ENCODE measurements at regions of chr11 and their contacts with region 1.

Region 1: DNA sequence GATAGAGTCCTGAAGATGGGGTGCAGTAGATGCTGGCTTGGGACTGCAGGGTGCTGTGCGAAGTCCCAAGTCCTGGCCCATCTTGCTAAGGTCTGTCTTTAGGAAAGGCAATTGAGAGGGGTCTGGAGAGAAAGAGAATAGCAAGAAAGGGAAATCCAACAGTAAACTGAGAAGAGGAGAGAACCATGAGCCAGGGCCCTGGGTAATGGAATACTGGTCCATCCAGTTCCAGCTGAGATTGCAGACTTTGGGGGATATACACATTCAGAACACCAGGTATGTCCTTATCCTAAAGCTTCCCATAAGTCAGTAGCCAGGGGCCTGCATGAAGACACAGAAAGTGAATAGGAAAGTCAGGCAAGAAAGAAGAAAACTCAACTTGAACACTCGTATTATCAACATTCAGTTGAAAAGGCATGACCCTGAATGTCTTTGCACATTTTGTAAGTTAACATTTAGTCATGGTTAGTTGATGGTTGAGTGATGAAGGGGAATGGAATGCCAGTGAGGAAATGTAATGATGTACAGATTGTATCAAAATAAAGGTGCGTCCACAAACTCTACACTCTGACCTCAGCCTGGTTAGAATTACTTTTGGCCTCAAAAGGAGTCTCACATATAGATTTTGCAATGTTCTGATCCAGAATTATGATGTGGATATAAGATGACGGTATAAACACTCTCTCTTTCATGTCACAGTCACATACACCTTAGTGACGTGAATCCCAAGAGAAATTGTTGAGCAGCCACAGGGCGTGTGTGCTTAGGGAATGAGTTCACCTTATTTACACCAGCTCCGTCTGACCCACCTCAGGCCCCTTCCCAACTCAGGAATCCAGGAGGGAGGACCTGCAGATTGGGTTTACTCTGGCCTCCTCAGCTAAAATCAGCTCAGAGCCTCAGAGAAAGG is 100.3 kb downstream of the RDX start:
- DNase-seq: no peak
- H3K4me3 ChIP-seq: no peak overlapping the region
- CTCF ChIP-seq: no peak

Region 2: DNA sequence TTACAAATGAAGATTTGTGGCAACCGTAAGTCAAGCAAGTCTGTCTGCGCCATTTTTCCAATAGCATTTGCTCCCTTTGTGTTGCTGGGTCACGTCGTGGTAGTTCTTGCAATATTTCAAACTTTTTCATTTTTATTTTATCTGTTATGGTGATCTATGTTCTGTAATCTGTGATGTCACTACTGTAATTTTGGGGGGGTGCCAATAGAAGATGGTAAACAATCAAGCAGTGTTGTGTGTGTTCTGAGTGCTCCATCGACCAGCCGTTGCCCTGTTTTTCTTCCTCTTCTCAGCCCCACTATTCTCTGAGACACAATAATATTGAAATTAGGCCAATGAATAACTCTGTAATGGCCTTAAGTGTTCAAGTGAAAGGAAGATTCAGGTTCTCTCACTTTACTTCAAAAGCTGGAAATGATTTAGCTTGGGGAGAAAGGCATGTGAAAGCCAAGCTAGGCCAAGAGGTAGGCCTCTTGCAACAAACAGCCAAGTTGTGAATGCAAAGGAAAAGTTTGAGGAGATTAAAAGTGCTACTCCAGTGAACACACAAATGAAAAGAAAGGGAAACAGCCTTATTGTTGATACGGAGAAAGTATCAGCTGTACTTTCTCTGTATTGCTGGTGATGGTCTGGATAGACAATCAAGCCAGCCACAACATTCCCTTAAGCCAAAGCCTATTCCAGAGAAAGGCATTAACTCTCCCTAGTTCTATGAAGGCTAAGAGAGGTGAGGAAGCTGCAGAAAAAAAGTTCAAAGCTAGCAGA is 95.4 kb before region 1 on chr11:
- CTCF ChIA-PET with region 1: no interaction called
- POLR2A ChIA-PET with region 1: no interaction called
- DNase-seq: no peak
- H3K4me3 ChIP-seq: no peak overlapping the region
- CTCF ChIP-seq: no peak

Region 3: DNA sequence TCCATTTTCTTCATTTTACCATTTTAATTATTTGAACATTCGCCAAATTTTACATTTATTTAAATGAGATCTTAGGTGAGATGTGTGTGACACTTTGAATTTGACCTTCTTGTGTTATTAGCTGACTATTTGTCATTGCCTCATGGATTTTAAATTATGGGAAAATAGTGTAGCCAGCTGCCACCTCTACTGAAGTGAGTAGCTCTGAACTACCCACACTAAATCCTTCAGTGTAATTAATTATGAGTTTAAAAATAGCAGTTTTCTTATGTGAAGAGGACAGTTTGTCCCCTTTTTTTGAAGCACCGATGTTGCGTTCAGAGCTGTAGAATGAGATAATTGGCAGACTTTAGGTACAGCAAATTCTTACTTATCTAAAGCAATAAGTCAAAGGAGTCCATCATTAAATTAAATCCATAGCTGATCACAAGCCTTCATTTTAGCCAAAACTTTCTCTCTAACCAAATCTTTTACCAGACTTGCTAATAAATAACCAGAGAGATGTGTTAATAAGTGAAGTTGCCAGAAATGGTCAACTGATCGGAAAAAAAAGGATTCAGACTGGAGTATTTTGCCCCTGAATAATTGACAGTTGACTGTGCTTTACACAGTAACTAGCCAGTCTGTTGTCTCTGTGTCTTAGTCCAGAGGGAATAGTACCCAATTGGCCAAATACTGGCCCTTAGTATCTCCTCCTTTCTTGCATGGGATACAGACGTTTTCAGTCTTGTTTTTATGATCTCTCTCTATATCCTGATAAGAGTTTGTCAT is 27.9 kb before region 1 on chr11:
- CTCF ChIA-PET with region 1: no interaction called
- POLR2A ChIA-PET with region 1: no interaction called
- DNase-seq: no peak
- H3K4me3 ChIP-seq: no peak overlapping the region
- CTCF ChIP-seq: no peak

Region 4: GRCh38 chr11:110185121-110185591 is 10.9 kb before region 1 on chr11:
- CTCF ChIA-PET with region 1: interaction called, 11 read pairs
- POLR2A ChIA-PET with region 1: no interaction called
- DNase-seq: no peak
- H3K4me3 ChIP-seq: no peak overlapping the region
- CTCF ChIP-seq: no peak

Region 5: GRCh38 chr11:110249051-110249450 is 53.0 kb after region 1 on chr11:
- CTCF ChIA-PET with region 1: interaction called, 12 read pairs
- POLR2A ChIA-PET with region 1: no interaction called
- DNase-seq: no peak
- H3K4me3 ChIP-seq: no peak overlapping the region
- CTCF ChIP-seq: no peak

Region 6: GRCh38 chr11:110376711-110377324 is 180.7 kb after region 1 on chr11:
- CTCF ChIA-PET with region 1: interaction called, 206 read pairs
- POLR2A ChIA-PET with region 1: no interaction called
- DNase-seq: peak; percentile 50
- H3K4me3 ChIP-seq: no peak overlapping the region
- CTCF ChIP-seq: peak; percentile 58